PC-9 (cell line): ENCODE measurements at regions of chr2 and their contacts with region 1.

Region 1: DNA sequence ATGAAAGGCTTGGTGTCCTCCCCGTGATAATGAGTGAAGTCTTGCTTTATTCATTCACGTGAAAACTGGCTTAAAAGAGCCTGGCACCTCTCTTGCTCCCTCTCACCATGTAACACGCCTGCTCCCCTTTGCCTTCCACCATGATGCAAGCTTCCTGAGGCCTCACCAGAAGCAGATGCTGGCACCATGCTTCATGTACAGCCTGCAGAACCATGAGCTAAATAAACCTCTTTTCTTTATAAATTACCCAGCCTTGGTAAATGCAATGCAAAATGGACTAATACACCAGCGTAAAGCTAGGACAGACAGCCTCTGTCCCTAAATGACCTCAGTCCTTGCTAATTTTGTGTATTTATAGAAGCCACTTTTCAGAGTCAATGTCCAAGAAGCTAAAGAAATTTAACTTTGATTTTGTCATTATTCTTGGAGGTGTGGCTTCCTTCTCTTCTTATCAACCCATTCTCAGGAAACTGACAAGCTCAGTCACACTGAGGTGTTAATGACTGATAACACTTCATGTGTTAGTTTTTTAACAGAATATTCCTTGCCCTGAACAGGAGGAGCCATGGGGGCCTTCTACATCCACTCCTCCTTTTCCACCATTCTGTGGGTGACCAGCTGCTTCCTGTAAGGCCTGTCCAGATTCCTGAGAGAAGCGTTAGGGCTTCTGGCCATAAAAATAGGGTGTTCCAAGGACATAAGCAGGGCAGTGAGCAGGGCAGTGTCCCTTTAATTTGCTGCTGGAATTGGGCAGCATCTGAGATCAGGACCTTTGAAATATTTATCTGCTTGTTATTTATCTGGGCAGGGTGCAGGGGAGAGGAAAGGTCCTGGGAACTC is 38.0 kb upstream of the EPAS1 start:
- DNase-seq: no peak
- H3K4me3 ChIP-seq: no peak overlapping the region
- H3K27ac ChIP-seq: no peak overlapping the region
- H3K4me1 ChIP-seq: no peaks in the 10 kb centered on the region
- H3K27me3 ChIP-seq: no peaks in the 10 kb centered on the region
- CTCF ChIP-seq: no peak

Region 2: DNA sequence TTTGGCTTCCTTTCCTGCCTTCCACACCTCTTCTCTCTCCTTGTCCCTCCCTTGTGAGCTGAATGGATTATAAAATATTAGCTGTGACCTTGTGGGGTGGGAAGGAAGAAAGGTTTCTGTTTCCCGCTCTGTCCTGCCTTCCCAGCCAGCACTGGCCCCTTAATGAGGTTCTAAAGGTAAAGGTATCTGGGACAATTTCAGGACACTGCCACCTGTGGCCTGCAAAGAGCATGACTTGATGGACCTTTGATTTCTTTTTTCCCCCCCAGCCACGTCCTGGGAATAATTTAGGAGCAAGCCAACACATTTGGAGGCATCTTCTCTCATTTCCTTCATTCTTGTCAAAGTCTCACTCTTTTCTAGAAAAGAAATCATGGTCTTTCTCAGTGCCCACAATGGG is 208.7 kb before region 1 on chr2:
- CTCF ChIA-PET with region 1: interaction called, 10 read pairs
- POLR2A ChIA-PET with region 1: no interaction called
- intact Hi-C with region 1: no loop called
- DNase-seq: no peak
- H3K4me3 ChIP-seq: no peak overlapping the region
- H3K27ac ChIP-seq: no peak overlapping the region
- H3K4me1 ChIP-seq: no peaks in the 10 kb centered on the region
- H3K27me3 ChIP-seq: no peaks in the 10 kb centered on the region
- CTCF ChIP-seq: peak; percentile 43; the same call in 1 of the 2 replicates